GM10248 (cell line): ENCODE measurements at regions of chr19 and their contacts with region 1.

Region 1: GRCh38 chr19:35135389-35135909 is 590 bp upstream of the LGI4 start:
- DNase-seq: peak; percentile 89
- CTCF ChIP-seq: peak; percentile 82

Region 2: GRCh38 chr19:35055715-35056179 is 79.7 kb before region 1 on chr19:
- CTCF ChIA-PET with region 1: interaction called, 11 read pairs
- POLR2A ChIA-PET with region 1: no interaction called
- DNase-seq: no peak
- CTCF ChIP-seq: peak; percentile 48

Region 3: GRCh38 chr19:35090506-35091237 is 44.8 kb before region 1 on chr19:
- CTCF ChIA-PET with region 1: interaction called, 12 read pairs
- POLR2A ChIA-PET with region 1: no interaction called
- DNase-seq: peak; percentile 76
- CTCF ChIP-seq: peak; percentile 49

Region 4: DNA sequence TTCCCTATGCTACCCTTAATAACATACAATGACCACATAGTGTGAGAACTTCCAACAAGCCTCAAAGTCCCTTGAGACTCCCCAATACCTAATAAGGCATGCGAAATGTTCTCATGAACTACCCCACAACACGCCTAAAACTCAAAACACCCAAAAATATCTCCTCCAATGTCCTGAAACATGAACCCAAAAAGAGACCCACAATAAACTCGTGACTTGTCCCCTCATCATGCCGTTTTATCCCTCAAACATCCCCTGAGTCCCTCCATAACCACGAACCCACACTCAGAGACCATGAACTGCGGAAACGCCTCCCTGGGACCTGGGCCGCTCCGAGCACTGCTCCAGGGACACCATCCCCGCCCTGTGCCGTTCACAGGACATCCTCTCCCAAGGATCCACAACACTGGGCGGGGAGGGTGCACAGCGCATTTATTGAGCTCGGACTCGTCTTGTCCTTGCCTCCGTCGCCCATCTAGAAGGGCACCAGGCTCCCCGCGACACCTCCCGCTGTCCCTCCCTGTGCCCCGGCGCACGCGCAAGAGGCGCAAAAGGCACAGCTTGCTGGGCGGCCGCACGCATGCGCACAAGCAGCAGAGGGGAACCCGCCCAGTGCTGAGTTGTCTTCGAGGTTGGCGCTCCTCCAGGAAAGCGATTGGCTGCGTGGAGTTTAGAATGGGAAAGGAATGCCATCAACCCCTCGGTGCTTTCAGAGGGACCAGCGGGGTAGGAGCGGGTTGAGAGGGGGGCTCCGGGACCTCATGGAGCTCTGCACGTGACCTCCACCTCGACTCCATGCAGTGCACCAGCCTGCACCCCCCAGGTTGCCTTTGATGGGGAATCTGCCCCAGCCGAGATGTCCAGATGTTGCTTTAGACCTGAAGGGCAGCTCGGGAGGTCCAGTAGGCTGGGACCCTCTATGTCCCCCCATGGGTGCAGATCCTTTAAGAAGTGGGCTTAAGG is 11.1 kb before region 1 on chr19:
- CTCF ChIA-PET with region 1: interaction called, 58 read pairs
- POLR2A ChIA-PET with region 1: no interaction called
- DNase-seq: peak; percentile 93
- CTCF ChIP-seq: no peak